Panc1 (cell line): ENCODE measurements at regions of chr5 and their contacts with region 1.

Region 1: DNA sequence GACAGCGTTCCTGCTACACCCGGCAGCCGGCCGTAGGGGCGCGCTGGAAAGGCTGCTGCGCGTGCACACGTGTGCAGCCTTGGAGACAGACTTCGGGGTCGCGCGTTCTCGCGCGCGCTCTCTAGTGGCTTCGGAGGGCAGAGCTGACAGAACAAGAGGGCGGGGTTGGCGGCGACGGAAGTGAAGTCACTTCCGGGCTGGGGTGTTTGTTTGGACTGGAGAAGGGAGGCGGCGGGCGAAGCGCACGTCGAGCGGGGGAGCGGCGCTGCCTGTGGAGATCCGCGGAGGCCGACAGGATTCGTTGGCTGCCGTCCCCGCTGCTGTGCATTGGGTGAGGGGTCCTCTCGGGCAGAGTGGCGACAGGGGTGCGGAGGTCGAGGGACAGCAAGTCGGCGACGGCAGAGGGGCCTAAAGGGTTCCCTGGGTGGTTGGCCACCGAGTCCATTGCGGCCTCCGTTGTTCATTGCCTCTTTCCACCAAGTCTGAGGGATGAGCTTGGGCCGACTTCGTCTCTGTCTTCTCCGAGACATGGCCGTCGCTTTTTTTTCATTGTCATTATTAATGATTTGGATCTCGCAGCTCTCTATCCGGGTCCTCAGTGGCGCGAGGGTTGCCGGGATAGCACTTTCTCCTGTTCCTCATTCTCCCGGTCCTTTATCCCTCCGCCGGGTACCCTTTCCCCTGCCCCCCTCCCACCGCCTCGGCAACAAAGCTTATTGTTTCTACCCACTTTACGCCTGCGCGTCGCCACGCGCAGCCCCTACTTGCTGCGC is at the start of gene PAIP2:
- DNase-seq: peak; percentile 85
- ATAC-seq: peak; percentile 93
- H3K4me3 ChIP-seq: peak within 1 kb of the TSS; percentile 82 to 98
- H3K27ac ChIP-seq: peak within 1 kb of the TSS; percentile 98
- H3K4me1 ChIP-seq: peaks cover 12% of the 10 kb centered on the region
- H3K27me3 ChIP-seq: no peaks in the 10 kb centered on the region
- CTCF ChIP-seq: peak; percentile 92
- total RNA-seq, gene PAIP2: 79.4 TPM

Region 2: GRCh38 chr5:138542956-138543729 is 798.7 kb before region 1 on chr5 and contains the start of gene ETF1:
- CTCF ChIA-PET with region 1: no interaction called
- POLR2A ChIA-PET with region 1: interaction called, 11 read pairs
- in situ Hi-C with region 1: no loop called
- intact Hi-C with region 1: no loop called
- DNase-seq: peak; percentile 92
- ATAC-seq: peak; percentile 95
- H3K4me3 ChIP-seq: peak within 1 kb of the TSS; percentile 90 to 97
- H3K27ac ChIP-seq: peak within 1 kb of the TSS; percentile 95
- H3K4me1 ChIP-seq: peaks cover 37% of the 10 kb centered on the region
- H3K27me3 ChIP-seq: no peaks in the 10 kb centered on the region
- CTCF ChIP-seq: no peak
- total RNA-seq, gene ETF1: 168 TPM

Region 3: GRCh38 chr5:139358064-139358463 is 16.2 kb after region 1 on chr5:
- CTCF ChIA-PET with region 1: no interaction called
- POLR2A ChIA-PET with region 1: interaction called, 10 read pairs
- in situ Hi-C with region 1: no loop called
- intact Hi-C with region 1: no loop called
- DNase-seq: no peak
- ATAC-seq: no peak
- H3K4me3 ChIP-seq: no peak overlapping the region
- H3K27ac ChIP-seq: no peak overlapping the region
- H3K4me1 ChIP-seq: no peaks in the 10 kb centered on the region
- H3K27me3 ChIP-seq: no peaks in the 10 kb centered on the region
- CTCF ChIP-seq: no peak

Region 4: GRCh38 chr5:139651853-139652787 is 310.3 kb after region 1 on chr5:
- CTCF ChIA-PET with region 1: no interaction called
- POLR2A ChIA-PET with region 1: interaction called, 17 read pairs
- in situ Hi-C with region 1: no loop called
- intact Hi-C with region 1: no loop called
- DNase-seq: peak; percentile 72
- ATAC-seq: peak; percentile 35
- H3K4me3 ChIP-seq: peak overlapping the region; percentile 78 to 81
- H3K27ac ChIP-seq: peak overlapping the region; percentile 82
- H3K4me1 ChIP-seq: peaks cover 57% of the 10 kb centered on the region
- H3K27me3 ChIP-seq: no peaks in the 10 kb centered on the region
- CTCF ChIP-seq: no peak

Region 5: GRCh38 chr5:139733698-139734538 is 392.1 kb after region 1 on chr5:
- CTCF ChIA-PET with region 1: no interaction called
- POLR2A ChIA-PET with region 1: no interaction called
- in situ Hi-C with region 1: no loop called
- intact Hi-C with region 1: no loop called
- DNase-seq: no peak
- ATAC-seq: peak; percentile 95
- H3K4me3 ChIP-seq: no peak overlapping the region
- H3K27ac ChIP-seq: peak overlapping the region; percentile 86
- H3K4me1 ChIP-seq: peaks cover 21% of the 10 kb centered on the region
- H3K27me3 ChIP-seq: no peaks in the 10 kb centered on the region
- CTCF ChIP-seq: no peak

Region 6: DNA sequence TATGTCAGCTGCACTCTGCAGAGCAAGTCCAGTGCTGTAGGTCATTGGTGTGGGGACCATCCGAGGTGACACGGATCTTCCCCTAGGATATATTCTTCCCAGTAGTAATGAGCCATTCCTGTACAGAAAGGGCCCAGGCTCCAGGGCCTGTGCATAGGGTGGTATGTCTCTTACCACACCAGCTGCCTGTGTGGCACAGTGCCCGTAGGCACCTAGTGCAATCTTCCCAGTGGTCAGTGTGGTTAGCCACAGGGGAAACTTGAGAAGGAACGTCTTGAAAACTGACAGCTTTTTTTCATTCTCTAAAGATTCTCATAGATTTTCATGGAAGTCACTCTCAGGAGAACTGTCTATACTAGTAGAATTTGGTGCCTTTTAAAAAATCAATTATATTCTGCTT is 873.0 kb after region 1 on chr5:
- CTCF ChIA-PET with region 1: no interaction called
- POLR2A ChIA-PET with region 1: interaction called, 11 read pairs
- in situ Hi-C with region 1: no loop called
- intact Hi-C with region 1: no loop called
- DNase-seq: no peak
- ATAC-seq: no peak
- H3K4me3 ChIP-seq: no peak overlapping the region
- H3K27ac ChIP-seq: no peak overlapping the region
- H3K4me1 ChIP-seq: peaks cover 7% of the 10 kb centered on the region; the same call in 1 of the 2 replicates
- H3K27me3 ChIP-seq: no peaks in the 10 kb centered on the region
- CTCF ChIP-seq: no peak